PC-3 (cell line): ENCODE measurements at regions of chr7 and their contacts with region 1.

Region 1: GRCh38 chr7:17041324-17041723 is 159.5 kb upstream of the AGR3 start:
- DNase-seq: peak; percentile 87
- ATAC-seq: peak; percentile 71
- H3K4me3 ChIP-seq: peak overlapping the region; percentile 9; the same call in 1 of the 2 replicates
- H3K27ac ChIP-seq: peak overlapping the region; percentile 80
- H3K4me1 ChIP-seq: peaks cover 53% of the 10 kb centered on the region
- H3K27me3 ChIP-seq: no peaks in the 10 kb centered on the region
- CTCF ChIP-seq: no peak

Region 2: GRCh38 chr7:16989811-16990413 is 51.4 kb before region 1 on chr7:
- CTCF ChIA-PET with region 1: no interaction called
- POLR2A ChIA-PET with region 1: no interaction called
- intact Hi-C with region 1: loop called (anchors 1 kb)
- DNase-seq: peak; percentile 98
- ATAC-seq: peak; percentile 91
- H3K4me3 ChIP-seq: peak overlapping the region; percentile 35; the same call in 1 of the 2 replicates
- H3K27ac ChIP-seq: peak overlapping the region; percentile 77
- H3K4me1 ChIP-seq: peaks cover 22% of the 10 kb centered on the region
- H3K27me3 ChIP-seq: no peaks in the 10 kb centered on the region
- CTCF ChIP-seq: no peak

Region 3: DNA sequence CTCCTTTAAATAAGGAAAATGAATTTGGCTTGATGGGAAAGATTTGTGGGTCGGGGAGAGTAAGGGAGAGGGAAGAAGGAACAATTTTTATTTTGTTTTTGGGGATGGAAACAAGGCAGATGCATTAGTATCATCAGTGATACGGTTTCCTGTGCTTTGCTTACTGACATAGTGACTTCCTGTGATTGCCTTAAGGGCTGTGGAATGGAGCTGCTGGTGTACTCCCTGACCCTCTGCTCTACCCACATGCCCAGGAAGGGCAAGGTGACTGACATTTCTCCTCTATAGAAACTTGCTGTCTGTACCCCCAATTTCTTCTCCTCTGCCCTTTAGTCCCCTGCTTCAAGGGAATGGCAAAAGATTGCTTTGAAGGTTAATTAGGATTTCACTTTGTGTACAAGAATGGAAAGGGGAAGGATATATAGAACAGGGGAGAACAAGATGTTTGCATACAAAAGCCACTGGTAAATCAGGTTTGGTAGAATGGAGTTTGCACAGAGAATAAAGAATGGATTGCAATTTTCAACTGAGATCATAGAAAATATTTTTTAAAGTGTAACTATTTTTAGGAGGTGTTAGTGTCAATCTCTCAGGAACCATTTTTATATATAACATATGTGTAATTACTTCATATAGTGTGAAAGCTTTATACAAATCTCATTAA is 30.6 kb before region 1 on chr7:
- CTCF ChIA-PET with region 1: no interaction called
- POLR2A ChIA-PET with region 1: no interaction called
- intact Hi-C with region 1: loop called (anchors 1 kb)
- DNase-seq: no peak
- ATAC-seq: peak; percentile 37; the same call in 1 of the 2 replicates
- H3K4me3 ChIP-seq: no peak overlapping the region
- H3K27ac ChIP-seq: no peak overlapping the region
- H3K4me1 ChIP-seq: peaks cover 28% of the 10 kb centered on the region
- H3K27me3 ChIP-seq: no peaks in the 10 kb centered on the region
- CTCF ChIP-seq: no peak